Mammary epithelial cell (primary cell): ENCODE measurements at regions of chr13 and their contacts with region 1.

Region 1: GRCh38 chr13:42039946-42040729 is 8.3 kb upstream of the DGKH start:
- DNase-seq: peak; percentile 81
- H3K4me3 ChIP-seq: peak overlapping the region; percentile 45 to 92 (median 67)
- H3K27ac ChIP-seq: peak overlapping the region; percentile 63
- H3K4me1 ChIP-seq: peaks cover 14% of the 10 kb centered on the region
- H3K27me3 ChIP-seq: no peaks in the 10 kb centered on the region
- CTCF ChIP-seq: peak in 1 of 2 donors; percentile 16

Region 2: GRCh38 chr13:41905600-41906254 is 134.4 kb before region 1 on chr13:
- CTCF ChIA-PET with region 1: no interaction called
- dilution Hi-C with region 1: no loop called
- in situ Hi-C with region 1: loop called (anchors 5 to 10 kb)
- intact Hi-C with region 1: loop called (anchors 1 kb)
- DNase-seq: peak; percentile 45
- H3K4me3 ChIP-seq: no peak overlapping the region
- H3K27ac ChIP-seq: no peak overlapping the region
- H3K4me1 ChIP-seq: peaks cover 10% of the 10 kb centered on the region
- H3K27me3 ChIP-seq: no peaks in the 10 kb centered on the region
- CTCF ChIP-seq: peak; percentile 74 to 79

Region 3: GRCh38 chr13:41916173-41916954 is 123.8 kb before region 1 on chr13:
- CTCF ChIA-PET with region 1: no interaction called
- dilution Hi-C with region 1: no loop called
- in situ Hi-C with region 1: no loop called
- intact Hi-C with region 1: loop called (anchors 5 kb)
- DNase-seq: peak; percentile 82
- H3K4me3 ChIP-seq: peak overlapping the region in 2 of 3 experiments; percentile 23 to 26
- H3K27ac ChIP-seq: peak overlapping the region; percentile 57
- H3K4me1 ChIP-seq: peaks cover 33% of the 10 kb centered on the region
- H3K27me3 ChIP-seq: no peaks in the 10 kb centered on the region
- CTCF ChIP-seq: no peak

Region 4: GRCh38 chr13:42028113-42028799 is 11.9 kb before region 1 on chr13:
- CTCF ChIA-PET with region 1: no interaction called
- dilution Hi-C with region 1: no loop called
- in situ Hi-C with region 1: no loop called
- intact Hi-C with region 1: loop called (anchors 1 kb)
- DNase-seq: no peak
- H3K4me3 ChIP-seq: no peak overlapping the region
- H3K27ac ChIP-seq: no peak overlapping the region
- H3K4me1 ChIP-seq: peaks cover 37% of the 10 kb centered on the region
- H3K27me3 ChIP-seq: no peaks in the 10 kb centered on the region
- CTCF ChIP-seq: no peak